Activated CD4-positive, alpha-beta T cell treated with anti-CD3 and anti-CD28 coated beads for 36 hours (primary cell): ENCODE measurements at regions of chr4 and their contacts with region 1.

Region 1: GRCh38 chr4:337143-337931 is at the start of gene ZNF141:
- DNase-seq: peak; percentile 95
- ATAC-seq: peak; percentile 96
- H3K4me3 Mint-ChIP-seq: peak within 1 kb of the TSS; percentile 99
- H3K27ac Mint-ChIP-seq: peak within 1 kb of the TSS; percentile 100
- H3K4me1 Mint-ChIP-seq: peaks cover 24% of the 10 kb centered on the region
- H3K27me3 Mint-ChIP-seq: no peaks in the 10 kb centered on the region
- total RNA-seq, gene ZNF141: 26.5 to 35.3 TPM

Region 2: DNA sequence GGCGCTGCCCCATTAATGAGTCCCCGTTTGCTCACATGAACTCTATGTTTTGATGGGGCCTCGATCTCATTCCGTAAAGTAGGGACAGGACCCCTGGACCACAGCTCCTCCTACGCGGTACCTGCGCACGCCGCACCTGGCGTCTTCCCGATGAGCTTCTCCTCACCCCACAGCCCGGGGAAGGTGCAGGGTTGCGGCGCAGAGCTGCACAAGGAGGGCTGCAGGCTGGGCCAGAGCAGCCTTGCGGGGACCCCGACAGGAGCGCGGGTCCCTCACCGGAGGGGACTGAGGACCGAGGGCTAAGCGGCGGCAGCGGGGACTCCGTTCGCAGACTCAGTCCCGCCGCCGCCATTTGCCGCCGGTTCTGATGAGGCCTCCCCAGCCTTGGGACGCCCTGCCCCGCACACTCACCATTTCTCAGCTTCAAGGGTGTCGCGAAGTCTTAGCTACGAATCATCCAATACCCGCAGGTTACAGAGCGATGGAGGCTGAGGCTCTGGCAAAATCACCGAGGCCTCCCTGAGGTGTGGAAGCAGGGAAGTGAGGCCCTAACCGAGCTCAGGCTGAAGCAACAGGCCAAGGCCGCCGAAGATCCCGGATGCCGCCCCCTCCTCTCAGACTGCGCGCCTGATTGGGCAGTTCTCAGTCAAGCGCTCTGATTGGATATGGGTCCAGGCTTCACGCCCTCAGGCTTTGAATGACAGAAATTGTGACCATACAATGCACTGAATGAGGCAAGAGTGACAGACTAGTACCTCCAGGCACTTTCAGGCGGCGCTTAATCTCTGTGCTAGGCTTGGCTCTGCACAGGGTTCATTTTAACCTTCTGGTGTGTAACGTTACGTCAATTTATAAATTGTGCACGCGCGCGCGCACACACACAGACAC is 136.5 kb after region 1 on chr4:
- CTCF ChIA-PET with region 1: interaction called, 3 read pairs
- POLR2A ChIA-PET with region 1: no interaction called
- intact Hi-C with region 1: loop called (anchors 1 to 2 kb)
- DNase-seq: peak; percentile 96
- ATAC-seq: peak; percentile 99
- H3K4me3 Mint-ChIP-seq: peak overlapping the region; percentile 98
- H3K27ac Mint-ChIP-seq: peak overlapping the region; percentile 100
- H3K4me1 Mint-ChIP-seq: peaks cover 38% of the 10 kb centered on the region
- H3K27me3 Mint-ChIP-seq: no peaks in the 10 kb centered on the region

Region 3: GRCh38 chr4:498328-498904 is 161.1 kb after region 1 on chr4:
- CTCF ChIA-PET with region 1: no interaction called
- POLR2A ChIA-PET with region 1: no interaction called
- intact Hi-C with region 1: loop called (anchors 1 to 2 kb)
- DNase-seq: no peak
- ATAC-seq: peak; percentile 23
- H3K4me3 Mint-ChIP-seq: peak overlapping the region; percentile 94
- H3K27ac Mint-ChIP-seq: peak overlapping the region; percentile 97
- H3K4me1 Mint-ChIP-seq: peaks cover 33% of the 10 kb centered on the region
- H3K27me3 Mint-ChIP-seq: no peaks in the 10 kb centered on the region

Region 4: GRCh38 chr4:602559-602942 is 265.2 kb after region 1 on chr4:
- CTCF ChIA-PET with region 1: no interaction called
- POLR2A ChIA-PET with region 1: no interaction called
- intact Hi-C with region 1: loop called in 1 of 2 experiments (anchors 5 kb)
- DNase-seq: peak; percentile 90
- ATAC-seq: peak; percentile 69
- H3K4me3 Mint-ChIP-seq: no peak overlapping the region
- H3K27ac Mint-ChIP-seq: no peak overlapping the region
- H3K4me1 Mint-ChIP-seq: peaks cover 19% of the 10 kb centered on the region
- H3K27me3 Mint-ChIP-seq: peaks cover 11% of the 10 kb centered on the region